OCI-LY7 (cell line): ENCODE measurements at regions of chr16 and their contacts with region 1.

Region 1: DNA sequence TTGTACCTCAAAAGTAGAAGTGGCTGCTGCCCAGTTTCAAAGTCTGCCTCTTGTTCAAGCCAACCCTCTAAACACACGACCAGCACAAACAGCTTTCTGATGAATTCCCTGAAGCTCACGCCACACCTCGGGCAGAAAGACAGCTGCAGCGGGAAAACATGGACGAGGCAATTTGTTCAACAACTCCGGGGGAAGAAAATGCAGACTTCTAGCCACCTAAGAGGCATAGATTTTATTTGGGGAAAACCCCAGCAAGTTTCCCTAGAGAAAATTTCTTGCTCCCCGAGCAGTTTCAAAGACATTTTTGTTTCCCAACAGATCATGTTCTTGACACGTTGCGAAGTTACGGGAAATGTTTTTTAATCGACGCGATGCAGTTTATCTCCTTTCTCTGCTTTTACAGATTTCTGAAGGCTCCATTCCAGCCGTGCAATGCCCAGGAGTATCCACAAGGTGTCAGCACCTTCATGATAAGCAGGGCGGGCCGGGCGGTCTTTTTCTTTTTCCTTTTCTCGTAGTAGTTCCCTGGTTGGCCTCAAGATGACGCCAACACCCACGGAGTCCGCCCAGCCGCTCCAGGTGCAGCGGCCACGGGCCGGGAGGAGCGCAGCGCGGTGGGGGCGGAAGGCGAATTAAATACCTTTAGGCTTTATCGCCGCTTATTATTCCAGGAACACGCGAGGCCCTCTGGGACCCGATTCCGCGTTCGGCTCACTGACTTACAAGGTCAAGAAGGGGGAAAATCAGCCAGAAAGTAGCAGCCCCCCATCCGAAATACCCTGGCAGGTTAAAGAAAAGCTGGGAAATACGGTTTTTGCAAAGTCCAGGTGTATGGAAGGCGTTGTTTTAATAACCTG is 2.9 kb upstream of the FOXC2 start:
- DNase-seq: peak; percentile 90
- H3K4me3 ChIP-seq: peak overlapping the region; percentile 39
- H3K27ac ChIP-seq: no peak overlapping the region
- H3K4me1 ChIP-seq: peaks cover 12% of the 10 kb centered on the region
- CTCF ChIP-seq: peak; percentile 100

Region 2: DNA sequence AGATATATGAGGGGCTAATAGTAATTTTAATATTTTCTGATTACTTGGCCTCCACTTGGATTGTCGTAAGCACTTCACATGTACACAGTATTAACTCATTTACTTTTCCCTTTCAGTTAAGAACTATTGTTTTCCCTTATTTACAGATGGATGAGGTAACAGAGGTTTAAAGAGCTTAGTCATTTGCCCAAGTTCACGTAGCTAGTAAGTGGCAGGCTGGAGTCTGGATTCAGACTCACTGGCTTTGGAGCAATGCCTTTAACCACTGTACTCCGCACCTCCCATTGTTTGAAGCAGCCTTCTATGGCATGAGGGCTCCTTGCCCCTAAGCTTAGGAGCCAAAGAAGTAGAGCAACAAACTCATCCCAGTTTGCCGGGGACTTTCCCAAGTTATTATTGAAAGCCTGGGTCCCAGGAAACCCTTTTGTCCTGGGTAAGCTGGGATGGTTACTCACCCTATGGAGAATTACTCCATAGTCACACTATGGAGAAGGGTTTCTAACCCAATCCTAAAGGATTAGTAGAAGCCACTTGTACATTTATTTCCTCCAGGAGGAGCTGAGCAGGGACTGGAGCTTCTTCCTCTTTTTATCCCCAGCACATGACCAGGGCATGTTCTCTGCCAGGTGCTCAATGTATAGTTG is 26.9 kb after region 1 on chr16:
- CTCF ChIA-PET with region 1: no interaction called
- POLR2A ChIA-PET with region 1: no interaction called
- intact Hi-C with region 1: no loop called
- DNase-seq: no peak
- H3K4me3 ChIP-seq: no peak overlapping the region
- H3K27ac ChIP-seq: no peak overlapping the region
- H3K4me1 ChIP-seq: no peaks in the 10 kb centered on the region
- CTCF ChIP-seq: no peak

Region 3: DNA sequence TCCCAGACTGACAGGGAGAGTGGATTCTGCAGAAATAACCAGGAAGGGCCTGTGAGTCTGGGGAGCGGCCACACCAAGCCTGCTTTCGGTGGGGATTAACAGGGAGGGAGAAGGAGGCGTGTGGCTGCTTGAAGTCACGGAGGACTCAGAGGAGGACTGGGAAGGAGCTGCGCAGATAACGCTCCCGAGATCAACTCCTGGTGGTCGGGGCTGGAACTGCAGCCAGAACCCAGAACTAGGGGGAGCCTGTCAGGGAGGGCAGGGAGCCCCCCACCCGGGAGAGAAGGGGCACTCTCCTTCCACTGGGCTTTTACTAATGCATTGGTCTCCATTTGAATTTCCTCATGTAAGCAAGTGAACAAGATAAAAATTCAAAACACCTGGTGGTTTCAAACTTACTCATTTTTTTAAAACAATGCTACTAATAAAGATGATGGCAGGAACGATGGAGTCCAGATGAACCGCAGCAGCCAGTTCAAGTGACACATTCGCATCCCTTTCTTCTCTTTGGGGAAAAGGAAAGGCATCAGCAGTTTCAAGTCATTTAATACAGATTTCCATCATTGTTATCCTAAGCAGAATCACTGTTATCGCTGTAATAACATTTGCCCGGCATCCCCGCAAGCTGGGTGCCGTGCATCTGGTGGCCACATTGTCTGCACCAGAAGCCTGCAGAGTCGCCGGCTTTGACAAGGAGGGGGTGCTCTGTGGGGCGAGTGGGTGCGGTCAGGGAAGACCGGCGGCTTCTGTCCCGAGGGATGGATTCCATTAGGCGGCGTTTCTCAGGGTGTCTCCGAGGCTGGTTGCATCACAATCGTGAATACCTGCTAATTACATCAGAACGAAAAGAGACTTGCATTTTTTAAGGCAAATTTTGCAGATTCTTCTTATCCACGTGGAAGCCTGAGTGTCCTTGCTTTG is 197.7 kb after region 1 on chr16:
- CTCF ChIA-PET with region 1: no interaction called
- POLR2A ChIA-PET with region 1: no interaction called
- intact Hi-C with region 1: loop called (anchors 5 kb)
- DNase-seq: peak; percentile 19
- H3K4me3 ChIP-seq: no peak overlapping the region
- H3K27ac ChIP-seq: no peak overlapping the region
- H3K4me1 ChIP-seq: no peaks in the 10 kb centered on the region
- CTCF ChIP-seq: peak; percentile 78

Region 4: DNA sequence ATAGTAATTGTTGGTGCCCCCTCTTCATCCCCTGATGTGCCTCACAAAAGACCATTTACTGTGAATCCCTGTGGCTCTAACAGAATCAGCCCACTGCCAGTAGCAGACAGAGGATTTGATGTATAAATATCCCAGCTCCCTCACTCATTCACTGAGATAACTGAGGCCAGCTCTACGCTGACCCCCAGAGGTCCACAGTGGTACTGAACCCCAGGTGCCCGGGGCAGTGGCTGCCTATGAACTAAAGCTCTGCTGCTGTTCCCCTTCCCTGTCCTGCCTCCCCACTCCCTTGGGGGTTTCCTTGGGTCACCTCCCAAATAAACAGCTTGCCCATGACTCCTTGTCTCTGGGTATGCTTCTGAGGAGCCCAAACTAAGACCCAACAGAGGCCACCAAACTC is 310.4 kb after region 1 on chr16:
- CTCF ChIA-PET with region 1: interaction called, 3 read pairs
- POLR2A ChIA-PET with region 1: no interaction called
- intact Hi-C with region 1: loop called (anchors 1 kb)
- DNase-seq: peak; percentile 31
- H3K4me3 ChIP-seq: no peak overlapping the region
- H3K27ac ChIP-seq: no peak overlapping the region
- H3K4me1 ChIP-seq: no peaks in the 10 kb centered on the region
- CTCF ChIP-seq: peak; percentile 80

Region 5: GRCh38 chr16:87062569-87063442 is 499.1 kb after region 1 on chr16:
- CTCF ChIA-PET with region 1: no interaction called
- POLR2A ChIA-PET with region 1: interaction called, 3 read pairs
- intact Hi-C with region 1: loop called (anchors 1 kb)
- DNase-seq: peak; percentile 80
- H3K4me3 ChIP-seq: peak overlapping the region; percentile 71
- H3K27ac ChIP-seq: peak overlapping the region; percentile 89
- H3K4me1 ChIP-seq: peaks cover 65% of the 10 kb centered on the region
- CTCF ChIP-seq: peak; percentile 97

Region 6: GRCh38 chr16:87076950-87077749 is 513.4 kb after region 1 on chr16:
- CTCF ChIA-PET with region 1: no interaction called
- POLR2A ChIA-PET with region 1: no interaction called
- intact Hi-C with region 1: loop called (anchors 1 kb)
- DNase-seq: peak; percentile 91
- H3K4me3 ChIP-seq: no peak overlapping the region
- H3K27ac ChIP-seq: peak overlapping the region; percentile 87
- H3K4me1 ChIP-seq: peaks cover 42% of the 10 kb centered on the region
- CTCF ChIP-seq: peak; percentile 93

Region 7: DNA sequence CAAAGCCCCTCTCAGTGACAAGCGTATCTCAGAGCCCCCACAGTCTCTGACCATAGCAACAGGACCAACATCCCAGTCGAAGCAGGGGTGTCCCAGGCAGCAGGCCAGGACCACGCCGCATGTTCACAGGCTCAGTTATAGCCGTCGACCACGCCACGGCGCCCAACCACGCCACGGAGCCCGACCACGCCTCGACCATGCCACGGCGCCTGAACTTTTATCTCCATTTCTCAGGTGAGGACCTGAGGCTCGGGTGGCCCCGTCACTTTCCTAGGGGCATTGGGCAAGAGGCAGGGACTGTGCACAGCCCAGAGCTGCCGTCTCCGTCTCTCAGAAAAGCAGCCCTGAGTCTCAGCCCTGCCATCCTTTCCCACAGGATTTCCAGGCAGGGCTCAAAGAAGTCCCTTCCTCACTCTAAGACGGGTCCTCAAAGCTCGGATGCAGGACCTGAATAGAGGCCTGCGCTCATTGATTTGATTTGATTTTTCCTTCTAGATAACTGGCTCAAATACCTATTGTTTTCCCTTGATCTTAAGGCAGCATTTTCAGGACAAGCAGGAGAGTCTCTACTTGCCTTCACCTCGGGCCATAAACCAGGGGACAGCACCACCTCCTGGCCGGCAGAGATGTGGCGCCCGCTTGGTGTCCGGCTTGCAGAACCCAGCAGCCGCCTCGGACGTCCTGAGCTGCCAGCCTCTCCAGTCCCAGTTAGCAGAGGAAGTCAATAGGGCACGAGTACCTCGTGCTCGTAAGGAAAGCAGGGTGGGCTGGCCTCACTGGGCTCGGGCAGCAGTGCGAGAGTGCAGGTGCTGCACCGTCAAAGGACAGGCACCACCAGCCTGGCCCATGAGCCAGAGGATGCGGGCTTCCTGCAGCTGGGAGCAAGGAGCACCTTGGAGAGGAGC is 714.7 kb after region 1 on chr16:
- CTCF ChIA-PET with region 1: no interaction called
- POLR2A ChIA-PET with region 1: no interaction called
- intact Hi-C with region 1: loop called (anchors 1 kb)
- DNase-seq: peak; percentile 59
- H3K4me3 ChIP-seq: no peak overlapping the region
- H3K27ac ChIP-seq: no peak overlapping the region
- H3K4me1 ChIP-seq: no peaks in the 10 kb centered on the region
- CTCF ChIP-seq: peak; percentile 84

Region 8: GRCh38 chr16:87297918-87298631 is 734.4 kb after region 1 on chr16:
- CTCF ChIA-PET with region 1: no interaction called
- POLR2A ChIA-PET with region 1: no interaction called
- intact Hi-C with region 1: loop called (anchors 5 kb)
- DNase-seq: peak; percentile 67
- H3K4me3 ChIP-seq: no peak overlapping the region
- H3K27ac ChIP-seq: no peak overlapping the region
- H3K4me1 ChIP-seq: peaks cover 25% of the 10 kb centered on the region
- CTCF ChIP-seq: peak; percentile 79